ENCODE measurements at regions of chr5 and their contacts with region 1.

Region 1: DNA sequence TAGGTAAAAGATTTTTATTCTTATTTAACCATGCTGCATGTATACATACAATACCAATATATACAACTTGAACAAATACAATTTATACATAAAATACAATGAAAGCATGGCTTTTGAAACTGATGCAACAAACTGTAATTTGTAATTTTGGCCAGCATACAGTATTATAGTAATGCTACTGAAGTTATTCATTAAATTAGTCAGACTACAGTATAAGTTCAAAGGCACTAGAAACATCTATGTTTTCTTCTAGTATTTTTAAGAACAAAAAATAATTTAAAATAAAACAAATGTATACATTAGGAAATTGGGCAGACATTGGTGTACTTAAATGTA is 18.8 kb downstream of the IL4 start:
- DNase-seq: no peak
- ATAC-seq: no peak
- H3K4me3 Mint-ChIP-seq: no peak overlapping the region
- H3K27ac Mint-ChIP-seq: no peak overlapping the region
- H3K4me1 Mint-ChIP-seq: peaks cover 20% of the 10 kb centered on the region
- H3K27me3 Mint-ChIP-seq: no peaks in the 10 kb centered on the region
- CTCF ChIP-seq: no peak

Region 2: DNA sequence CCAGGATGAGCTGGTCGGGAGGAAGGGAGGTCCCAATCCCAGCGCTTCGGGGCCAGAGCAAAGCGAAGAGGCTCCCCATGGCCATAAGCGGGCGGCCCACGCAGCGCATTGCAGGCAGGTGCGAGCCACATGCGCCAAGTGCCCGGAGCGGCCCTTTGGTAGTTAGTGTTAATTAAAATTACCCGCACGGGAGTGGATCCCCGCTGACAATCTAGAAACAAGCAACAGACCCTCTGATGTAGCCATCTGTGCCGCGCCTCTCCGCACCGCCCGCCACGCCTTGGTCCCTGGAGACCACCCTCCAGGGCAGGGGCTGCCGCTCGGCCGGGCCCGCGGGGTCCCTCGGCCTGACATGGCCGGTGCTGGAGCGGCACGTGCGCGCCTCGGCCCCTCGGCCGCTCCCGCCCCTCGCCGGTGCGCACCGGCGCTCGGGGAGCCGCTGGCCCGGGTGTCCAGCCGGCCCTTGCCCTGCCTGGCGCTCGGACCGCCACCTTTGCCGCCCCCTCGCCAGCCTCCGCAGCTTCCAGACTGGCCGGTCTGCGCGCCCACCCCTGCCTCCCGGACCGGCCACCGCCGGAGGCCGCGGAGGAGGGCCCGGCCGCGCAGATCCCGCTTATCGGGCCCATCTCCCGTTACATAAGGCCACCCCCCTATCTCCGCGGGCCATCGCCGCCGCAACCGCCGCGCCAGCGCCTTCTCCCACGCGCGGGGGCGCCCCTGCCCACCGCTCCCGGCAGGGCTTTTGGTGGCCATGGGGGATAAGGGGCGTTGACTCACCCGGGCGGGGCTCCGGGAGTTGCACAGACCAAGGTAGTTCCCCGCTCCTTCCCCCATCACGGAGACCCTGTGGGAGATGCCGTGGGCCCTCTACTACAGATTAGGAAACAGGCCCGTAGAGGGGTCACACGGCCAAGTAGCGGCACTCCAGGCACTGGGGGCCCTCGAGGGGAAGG is 36.5 kb before region 1 on chr5:
- CTCF ChIA-PET with region 1: no interaction called
- POLR2A ChIA-PET with region 1: no interaction called
- intact Hi-C with region 1: loop called (anchors 5 kb)
- DNase-seq: peak; percentile 20
- ATAC-seq: peak; percentile 54
- H3K4me3 Mint-ChIP-seq: peak overlapping the region; percentile 60
- H3K27ac Mint-ChIP-seq: no peak overlapping the region
- H3K4me1 Mint-ChIP-seq: peaks cover 12% of the 10 kb centered on the region
- H3K27me3 Mint-ChIP-seq: peaks cover 21% of the 10 kb centered on the region
- CTCF ChIP-seq: no peak